GM12878 (cell line): ENCODE measurements at regions of chr16 and their contacts with region 1.

Region 1: DNA sequence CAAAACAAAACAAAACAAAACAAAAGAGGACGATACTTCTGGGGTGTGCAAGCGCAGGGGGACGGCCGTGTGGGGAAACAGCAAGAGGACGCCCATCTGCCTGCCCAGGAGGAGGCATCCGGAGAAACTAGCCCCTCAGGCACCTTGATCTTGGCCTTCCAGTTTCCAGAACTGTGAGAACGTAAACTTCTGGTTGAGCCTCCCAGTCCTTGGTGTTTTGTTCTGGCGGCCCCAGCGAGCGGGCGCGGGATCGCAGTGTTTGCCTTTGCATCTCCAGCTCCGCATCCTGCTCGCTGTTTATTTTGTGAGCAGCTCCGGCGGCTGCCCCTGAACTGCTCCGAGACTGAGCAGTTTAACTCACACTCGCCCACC is 1.0 kb upstream of the MMP25 start:
- DNase-seq: no peak
- ATAC-seq: peak; percentile 45
- H3K4me3 ChIP-seq: peak overlapping the region; percentile 82; the same call in 1 of the 2 replicates
- H3K27ac ChIP-seq: no peak overlapping the region
- H3K4me1 ChIP-seq: peaks cover 2% of the 10 kb centered on the region; the same call in 1 of the 2 replicates
- H3K27me3 ChIP-seq: peaks cover 0 to 1% of the 10 kb centered on the region in 2 experiments; a peak in 2 of 4 replicates
- CTCF ChIP-seq: no peak
- EP300 ChIP-seq: no peak
- POLR2A ChIP-seq: no peak
- RAD21 ChIP-seq: no peak

Region 2: DNA sequence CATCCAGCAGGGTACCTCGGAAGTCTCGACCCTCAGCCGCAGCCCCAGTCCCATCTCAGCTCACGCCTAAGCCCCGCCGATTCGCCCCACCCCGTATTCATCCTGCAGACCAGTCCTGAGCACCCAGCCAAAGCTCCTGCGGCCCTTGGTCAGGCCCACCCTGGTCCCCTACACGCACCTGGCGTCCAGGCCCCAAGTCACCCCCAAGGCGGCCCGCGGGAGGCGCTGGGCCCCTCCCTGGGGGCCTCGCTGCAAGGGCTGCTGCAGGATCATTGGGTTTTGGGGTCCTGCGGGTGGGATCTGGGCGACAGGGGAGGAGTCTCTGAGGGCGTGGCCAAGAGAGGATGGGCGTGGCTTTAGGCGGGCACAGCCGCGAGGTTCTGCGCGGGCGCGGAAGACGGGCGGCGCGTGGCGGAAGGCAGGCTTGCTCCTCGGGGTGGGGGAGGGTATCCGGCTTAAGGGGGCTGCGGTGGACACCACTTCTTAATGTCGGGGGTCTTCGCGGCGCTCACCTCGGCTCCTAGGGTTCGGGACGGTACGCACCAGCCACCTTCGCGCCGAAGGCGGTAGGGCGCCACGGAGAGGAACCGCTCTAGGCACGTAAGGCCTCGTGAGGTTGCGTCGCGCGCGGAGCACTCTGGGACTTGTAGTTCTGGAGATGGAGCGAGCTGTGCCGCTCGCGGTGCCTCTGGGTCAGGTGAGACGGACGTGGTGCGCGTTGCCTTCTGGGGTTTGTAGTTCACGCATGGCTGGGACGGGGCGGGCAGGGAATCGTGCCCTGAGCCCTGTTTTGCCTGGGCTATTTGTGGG is 21.5 kb before region 1 on chr16 and contains the starts of genes HCFC1R1 and THOC6:
- CTCF ChIA-PET with region 1: interaction called, 76 read pairs
- POLR2A ChIA-PET with region 1: interaction called, 9 read pairs
- RAD21 ChIA-PET with region 1: interaction called, 3 read pairs
- SMC1A ChIA-PET with region 1: interaction called, 4 read pairs
- in situ Hi-C with region 1: no loop called
- intact Hi-C with region 1: no loop called
- DNase-seq: peak; percentile 94
- ATAC-seq: peak; percentile 85
- H3K4me3 ChIP-seq: peak within 1 kb of the TSS; percentile 87
- H3K27ac ChIP-seq: peak within 1 kb of the TSS; percentile 86
- H3K4me1 ChIP-seq: peaks cover 25% of the 10 kb centered on the region
- H3K27me3 ChIP-seq: no peaks in the 10 kb centered on the region; a peak in 1 of 4 replicates
- CTCF ChIP-seq: no peak
- EP300 ChIP-seq: no peak
- POLR2A ChIP-seq: peak; percentile 95
- RAD21 ChIP-seq: no peak
- polyA plus RNA-seq, gene HCFC1R1: 2.8 to 10.2 TPM
- polyA plus RNA-seq, gene THOC6: 1.0 to 2.4 TPM

Region 3: GRCh38 chr16:3029537-3030402 is 15.6 kb before region 1 on chr16:
- CTCF ChIA-PET with region 1: interaction called, 76 read pairs
- POLR2A ChIA-PET with region 1: interaction called, 9 read pairs
- RAD21 ChIA-PET with region 1: interaction called, 7 read pairs
- SMC1A ChIA-PET with region 1: interaction called, 4 read pairs
- in situ Hi-C with region 1: no loop called
- intact Hi-C with region 1: no loop called
- DNase-seq: no peak
- ATAC-seq: no peak
- H3K4me3 ChIP-seq: no peak overlapping the region
- H3K27ac ChIP-seq: no peak overlapping the region
- H3K4me1 ChIP-seq: peaks cover 6% of the 10 kb centered on the region
- H3K27me3 ChIP-seq: peaks cover 7 to 8% of the 10 kb centered on the region in 2 experiments
- CTCF ChIP-seq: no peak
- EP300 ChIP-seq: no peak
- POLR2A ChIP-seq: peak; percentile 22; the same call in 1 of the 2 replicates
- RAD21 ChIP-seq: no peak